Dendritic cell treated with granulocyte-macrophage colony-stimulating factor and Interleukin-4, amounts not matched to agents 40 ng/mL and 50 ng/mL, for 4 days (primary cell): ENCODE measurements at regions of chr2 and their contacts with region 1.

Region 1: GRCh38 chr2:16630463-16630862 is 35.2 kb downstream of the CYRIA start:
- H3K4me3 Mint-ChIP-seq: no peak overlapping the region
- H3K27ac Mint-ChIP-seq: peak overlapping the region; percentile 86
- H3K4me1 Mint-ChIP-seq: peaks cover 100% of the 10 kb centered on the region
- H3K27me3 Mint-ChIP-seq: no peaks in the 10 kb centered on the region

Region 2: DNA sequence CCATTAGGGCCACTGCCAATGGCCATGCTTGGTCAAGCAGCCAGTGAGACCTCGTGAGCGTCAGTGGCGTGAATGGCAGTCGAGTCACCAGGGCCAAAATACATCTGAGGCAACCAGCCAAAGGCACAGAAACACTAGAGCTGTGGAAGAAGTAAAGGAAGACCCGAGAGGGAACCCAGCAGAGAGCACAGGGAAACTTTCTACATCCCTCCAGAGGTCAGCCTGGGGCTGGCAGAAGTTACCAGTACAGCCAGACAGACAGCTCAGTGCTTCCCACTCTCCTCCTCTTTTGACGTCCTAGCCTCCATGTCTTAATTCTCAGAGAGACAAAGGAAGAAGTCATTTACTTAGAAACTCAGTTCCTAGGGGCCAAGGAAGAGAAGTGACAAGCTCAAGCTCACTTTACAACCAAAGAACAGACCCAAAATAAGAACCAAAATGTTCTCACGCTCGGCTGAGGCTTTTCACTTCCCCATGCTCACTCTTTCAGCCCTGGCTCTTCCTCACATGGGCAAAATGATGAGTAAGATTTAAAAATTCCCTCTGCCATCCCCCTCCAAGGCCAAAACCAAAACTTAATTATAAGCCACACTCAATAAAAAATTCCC is 26.4 kb after region 1 on chr2:
- intact Hi-C with region 1: loop called (anchors 2 kb)
- H3K4me3 Mint-ChIP-seq: no peak overlapping the region
- H3K27ac Mint-ChIP-seq: peak overlapping the region; percentile 81
- H3K4me1 Mint-ChIP-seq: peaks cover 85% of the 10 kb centered on the region
- H3K27me3 Mint-ChIP-seq: no peaks in the 10 kb centered on the region